Motor neuron (in vitro differentiated cells): ENCODE measurements at regions of chr10 and their contacts with region 1.

Region 1: GRCh38 chr10:122565728-122566206 is 5.2 kb downstream of the DMBT1 start:
- ATAC-seq: peak; percentile 33 to 78 (median 58)
- H3K4me3 ChIP-seq: no peak overlapping the region
- H3K27ac ChIP-seq: no peak overlapping the region
- H3K4me1 ChIP-seq: no peaks in the 10 kb centered on the region

Region 2: DNA sequence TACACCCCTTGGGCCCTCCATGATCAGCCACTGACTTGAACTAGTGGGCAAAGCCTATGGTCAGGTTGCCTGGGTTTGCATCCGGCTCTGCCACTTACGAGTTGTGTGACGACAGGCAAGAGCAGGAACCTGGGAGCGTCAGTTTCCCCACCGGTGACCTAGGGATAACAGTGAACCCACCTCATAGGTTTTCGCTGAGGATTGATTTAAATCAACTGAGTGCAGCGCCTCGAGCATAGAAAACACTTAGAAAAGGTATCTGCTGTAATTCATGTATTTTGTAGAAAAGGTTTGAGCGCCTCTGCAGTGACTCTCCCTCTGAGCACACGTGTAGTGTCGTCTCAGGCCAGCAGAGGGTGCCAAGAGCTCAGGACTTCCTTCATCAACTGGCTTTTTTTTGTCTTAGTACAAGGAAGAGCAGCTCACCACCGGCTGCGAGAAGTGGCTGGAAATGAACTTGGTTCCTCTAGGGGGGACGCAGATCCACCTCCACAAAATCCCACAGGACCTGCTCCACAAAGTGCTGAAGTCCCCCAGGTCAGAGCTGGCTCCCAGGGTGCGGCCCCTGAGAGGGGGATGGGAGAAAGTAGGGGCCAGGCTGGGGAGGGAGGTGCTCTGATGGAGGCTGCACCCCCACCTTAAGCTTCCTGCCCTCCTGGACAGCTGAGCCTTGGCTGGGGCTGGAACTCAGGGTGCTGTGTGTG is 267.0 kb before region 1 on chr10:
- in situ Hi-C with region 1: loop called (anchors 10 to 25 kb)
- ATAC-seq: peak; percentile 78 to 97 (median 88)
- H3K4me3 ChIP-seq: no peak overlapping the region
- H3K27ac ChIP-seq: no peak overlapping the region
- H3K4me1 ChIP-seq: no peaks in the 10 kb centered on the region

Region 3: GRCh38 chr10:122307669-122308486 is 257.9 kb before region 1 on chr10:
- in situ Hi-C with region 1: loop called in 1 of 9 experiments (anchors 10 kb)
- ATAC-seq: peak in 6 of 8 experiments; percentile 53 to 96 (median 88)
- H3K4me3 ChIP-seq: no peak overlapping the region
- H3K27ac ChIP-seq: no peak overlapping the region
- H3K4me1 ChIP-seq: no peaks in the 10 kb centered on the region